Activated naive CD4-positive, alpha-beta T cell treated with anti-CD3 and anti-CD28 coated beads for 36 hours (primary cell): ENCODE measurements at regions of chr12 and their contacts with region 1.

Region 1: GRCh38 chr12:66210840-66211239 is 21.8 kb downstream of the IRAK3 start:
- DNase-seq: no peak
- H3K4me3 Mint-ChIP-seq: no peak overlapping the region
- H3K27ac Mint-ChIP-seq: no peak overlapping the region
- H3K4me1 Mint-ChIP-seq: peaks cover 12% of the 10 kb centered on the region
- H3K27me3 Mint-ChIP-seq: peaks cover 24% of the 10 kb centered on the region

Region 2: DNA sequence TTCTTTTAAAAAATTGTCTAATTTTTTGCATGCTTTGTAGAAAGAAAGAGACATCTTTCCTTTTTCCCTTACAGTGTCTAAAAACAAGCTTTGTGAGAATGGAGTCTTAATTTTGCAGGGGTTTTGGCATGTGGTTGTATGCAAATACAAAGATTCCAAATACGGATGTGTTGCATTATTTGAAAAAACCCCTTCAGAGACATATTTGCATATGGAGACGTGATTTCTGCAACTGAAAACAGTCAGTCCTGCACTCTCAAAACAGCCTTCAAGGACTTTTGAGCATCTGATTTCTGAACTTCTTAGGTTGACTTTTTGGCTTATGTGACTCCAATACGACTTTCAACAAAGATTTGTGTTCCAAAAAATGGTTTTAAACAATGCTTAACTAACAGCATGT is 14.0 kb before region 1 on chr12:
- CTCF ChIA-PET with region 1: interaction called, 3 read pairs
- intact Hi-C with region 1: loop called (anchors 1 kb)
- DNase-seq: peak; percentile 17
- H3K4me3 Mint-ChIP-seq: no peak overlapping the region
- H3K27ac Mint-ChIP-seq: peak overlapping the region; percentile 33
- H3K4me1 Mint-ChIP-seq: peaks cover 10% of the 10 kb centered on the region
- H3K27me3 Mint-ChIP-seq: peaks cover 22% of the 10 kb centered on the region